HEK293 (cell line): ENCODE measurements at regions of chr17 and their contacts with region 1.

Region 1: GRCh38 chr17:55717898-55718735 is 4.5 kb downstream of the TMEM100 start:
- H3K4me3 ChIP-seq: no peak overlapping the region
- H3K27ac ChIP-seq: no peak overlapping the region
- H3K4me1 ChIP-seq: peaks cover 20% of the 10 kb centered on the region
- CTCF ChIP-seq: 0 out of 2 replicates have a peak, but pooled peaks have one; percentile 27

Region 2: GRCh38 chr17:55533608-55534007 is 184.5 kb before region 1 on chr17:
- CTCF ChIA-PET with region 1: interaction called, 40 read pairs
- POLR2A ChIA-PET with region 1: interaction called, 3 read pairs
- H3K4me3 ChIP-seq: no peak overlapping the region
- H3K27ac ChIP-seq: no peak overlapping the region
- H3K4me1 ChIP-seq: no peaks in the 10 kb centered on the region
- CTCF ChIP-seq: no peak

Region 3: GRCh38 chr17:55549140-55549539 is 169.0 kb before region 1 on chr17:
- CTCF ChIA-PET with region 1: interaction called, 12 read pairs
- POLR2A ChIA-PET with region 1: no interaction called
- H3K4me3 ChIP-seq: no peak overlapping the region
- H3K27ac ChIP-seq: no peak overlapping the region
- H3K4me1 ChIP-seq: no peaks in the 10 kb centered on the region
- CTCF ChIP-seq: no peak

Region 4: GRCh38 chr17:55735731-55736405 is 17.8 kb after region 1 on chr17:
- CTCF ChIA-PET with region 1: interaction called, 40 read pairs
- POLR2A ChIA-PET with region 1: no interaction called
- H3K4me3 ChIP-seq: no peak overlapping the region
- H3K27ac ChIP-seq: no peak overlapping the region
- H3K4me1 ChIP-seq: peaks cover 28% of the 10 kb centered on the region
- CTCF ChIP-seq: peak; percentile 40; the same call in 1 of the 2 replicates